ENCODE measurements at regions of chr14 and their contacts with region 1.

Region 1: GRCh38 chr14:57066887-57067513 is 201.7 kb downstream of the EXOC5 start:
- DNase-seq: peak; percentile 17 to 67 (median 28)
- ATAC-seq: peak; percentile 95
- H3K4me3 ChIP-seq: no peak overlapping the region
- H3K27ac ChIP-seq: no peak overlapping the region
- H3K4me1 ChIP-seq: no peaks in the 10 kb centered on the region
- H3K27me3 ChIP-seq: 0 out of 5 replicates have a peak, but pooled peaks cover 0 to 2% of the 10 kb centered on the region in 2 experiments
- CTCF ChIP-seq: peak; percentile 71 to 82 (median 79)
- EP300 ChIP-seq: no peak
- POLR2A ChIP-seq: no peak
- RAD21 ChIP-seq: peak; percentile 78 to 87

Region 2: DNA sequence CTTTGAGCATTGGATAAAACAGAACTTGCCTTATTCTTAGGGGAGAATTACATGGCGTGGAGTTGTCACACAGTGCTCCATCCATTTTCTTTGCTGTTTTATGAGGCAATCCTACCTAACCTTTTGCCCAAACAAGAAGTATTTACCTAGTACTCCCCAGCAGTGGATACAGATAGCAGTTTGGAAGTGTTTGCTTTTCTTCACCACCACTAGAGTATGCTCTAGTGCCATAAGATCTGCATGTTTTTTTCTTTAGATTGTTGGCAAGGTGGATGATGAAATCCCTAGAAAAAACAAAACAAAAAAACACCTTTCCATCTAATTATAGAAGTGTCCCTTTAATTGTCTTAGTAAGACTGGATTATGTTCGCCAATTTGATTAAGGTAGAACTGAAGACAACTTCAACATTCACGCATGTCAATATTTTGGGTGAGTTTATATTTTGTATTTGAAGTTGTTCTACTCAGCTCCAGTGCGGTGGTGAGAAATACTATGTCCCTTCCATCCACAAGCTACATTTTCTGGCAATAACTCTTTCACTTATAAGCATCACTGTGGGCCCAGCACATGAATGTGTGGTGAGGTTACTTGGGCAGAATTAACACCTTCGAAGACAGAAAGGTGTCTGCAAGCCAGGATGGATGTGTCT is 511.0 kb before region 1 on chr14:
- CTCF ChIA-PET with region 1: no interaction called
- POLR2A ChIA-PET with region 1: no interaction called
- in situ Hi-C with region 1: loop called (anchors 25 kb)
- intact Hi-C with region 1: loop called (anchors 2 kb)
- DNase-seq: peak; percentile 7 to 41 (median 24)
- ATAC-seq: peak; percentile 91
- H3K4me3 ChIP-seq: no peak overlapping the region
- H3K27ac ChIP-seq: no peak overlapping the region
- H3K4me1 ChIP-seq: no peaks in the 10 kb centered on the region; a peak in 2 of 5 replicates
- H3K27me3 ChIP-seq: peaks cover 3 to 12% of the 10 kb centered on the region in 2 experiments; a peak in 3 of 5 replicates
- CTCF ChIP-seq: peak; percentile 35 to 79 (median 64); a peak in 5 of 6 replicates
- EP300 ChIP-seq: peak; percentile 68
- POLR2A ChIP-seq: no peak
- RAD21 ChIP-seq: peak; percentile 77 to 86

Region 3: GRCh38 chr14:56884617-56885016 is 182.4 kb before region 1 on chr14:
- CTCF ChIA-PET with region 1: no interaction called
- POLR2A ChIA-PET with region 1: no interaction called
- in situ Hi-C with region 1: no loop called
- intact Hi-C with region 1: loop called (anchors 10 kb)
- DNase-seq: peak in 1 of 4 experiments; percentile 1
- ATAC-seq: no peak
- H3K4me3 ChIP-seq: no peak overlapping the region
- H3K27ac ChIP-seq: no peak overlapping the region
- H3K4me1 ChIP-seq: no peaks in the 10 kb centered on the region
- H3K27me3 ChIP-seq: no peaks in the 10 kb centered on the region
- CTCF ChIP-seq: peak in 1 of 3 experiments; percentile 13; a peak in 1 of 6 replicates
- EP300 ChIP-seq: no peak
- POLR2A ChIP-seq: no peak
- RAD21 ChIP-seq: peak in 1 of 2 experiments; percentile 18; a peak in 1 of 4 replicates

Region 4: DNA sequence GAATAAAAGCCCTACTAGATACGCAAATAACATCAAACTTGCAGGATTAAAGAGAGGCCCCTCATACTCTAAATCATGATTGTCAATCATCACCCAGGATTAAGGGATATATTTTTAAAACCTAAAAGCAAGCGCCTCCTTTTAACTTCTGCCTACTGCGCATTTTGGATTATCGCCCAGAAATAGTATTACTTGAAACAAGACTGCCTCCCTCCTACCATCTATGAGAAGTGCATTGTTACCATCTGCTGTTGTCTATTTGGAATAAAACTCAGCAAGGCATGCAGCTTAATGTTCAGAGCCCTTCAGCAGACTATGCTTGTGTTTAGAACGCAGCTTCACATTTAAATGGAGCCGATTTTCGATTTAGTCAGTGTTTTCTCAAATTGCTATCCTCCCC is 122.1 kb after region 1 on chr14:
- CTCF ChIA-PET with region 1: no interaction called
- POLR2A ChIA-PET with region 1: no interaction called
- in situ Hi-C with region 1: no loop called
- intact Hi-C with region 1: loop called (anchors 5 kb)
- DNase-seq: peak in 2 of 4 experiments; percentile 13 to 15
- ATAC-seq: peak; percentile 63; the same call in 2 of the 3 replicates
- H3K4me3 ChIP-seq: no peak overlapping the region
- H3K27ac ChIP-seq: no peak overlapping the region
- H3K4me1 ChIP-seq: no peaks in the 10 kb centered on the region
- H3K27me3 ChIP-seq: peaks cover 4 to 5% of the 10 kb centered on the region in 2 experiments; a peak in 3 of 5 replicates
- CTCF ChIP-seq: peak in 2 of 3 experiments; percentile 17 to 44; a peak in 3 of 6 replicates
- EP300 ChIP-seq: no peak
- POLR2A ChIP-seq: no peak
- RAD21 ChIP-seq: peak; percentile 40 to 53

Measured in K562 (cell line).